Activated T-helper 1 cell treated with anti-CD3 and anti-CD28 coated beads, Interleukin-12 subunit alpha, Interleukin-12 subunit beta, Interleukin-2, Interleukin-4 antibody, amounts not matched to agents 30 ng/mL and 10 ng/mL and 1 ng/mL, durations not matched to agents 14 hours and 24 hours and 36 hours (primary cell): ENCODE measurements at regions of chr13 and their contacts with region 1.

Region 1: DNA sequence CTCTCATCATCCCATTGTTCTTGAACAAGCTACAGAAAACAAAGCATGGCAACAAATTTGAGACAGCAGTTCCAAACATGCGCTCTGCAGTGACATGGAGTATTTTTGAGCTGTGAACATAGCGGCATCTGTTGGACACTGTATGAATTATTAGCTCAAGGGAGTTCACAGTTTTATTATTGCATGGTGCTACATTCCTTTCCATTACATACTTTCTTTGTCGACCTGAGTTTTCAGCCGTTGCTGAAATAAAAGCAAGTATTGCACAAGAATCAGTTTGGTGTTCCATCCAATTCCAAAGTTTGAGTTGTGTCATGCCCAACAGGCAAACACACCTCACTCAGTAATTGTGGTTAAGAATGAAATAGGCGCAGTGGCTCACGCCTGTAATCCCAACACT is 30.1 kb upstream of the METTL21C start:
- DNase-seq: no peak
- H3K4me3 Mint-ChIP-seq: no peak overlapping the region
- H3K27ac Mint-ChIP-seq: no peak overlapping the region
- H3K4me1 Mint-ChIP-seq: peaks cover 13% of the 10 kb centered on the region
- H3K27me3 Mint-ChIP-seq: peaks cover 20% of the 10 kb centered on the region

Region 2: DNA sequence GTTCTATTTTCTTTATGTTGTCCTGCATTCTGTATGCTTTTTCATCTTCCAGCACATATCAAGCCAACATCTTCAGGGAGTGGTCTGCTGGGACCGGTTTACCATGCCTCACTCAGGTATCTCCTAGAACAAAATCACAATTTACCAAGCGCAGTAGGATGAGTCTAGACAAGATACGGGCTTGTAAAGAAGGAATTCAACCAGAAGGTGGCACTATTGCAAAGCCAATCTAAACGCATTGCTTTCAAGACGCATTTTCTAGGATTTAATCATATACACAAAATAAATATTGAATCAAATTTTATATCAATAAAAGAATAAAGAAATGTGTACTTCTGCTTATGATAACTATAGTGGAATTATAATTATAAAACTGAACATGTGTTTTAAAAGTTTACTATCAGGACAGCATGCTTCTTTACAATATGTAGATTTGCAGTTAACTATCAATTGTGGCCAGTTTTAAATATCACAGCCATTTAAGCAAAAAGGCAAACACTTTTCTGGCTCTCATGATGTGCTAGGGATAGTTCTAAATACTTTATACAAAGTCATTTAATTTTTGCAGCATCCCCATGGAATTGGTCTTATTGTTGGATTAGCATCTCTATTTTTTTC is 144.3 kb before region 1 on chr13:
- intact Hi-C with region 1: loop called (anchors 2 kb)
- DNase-seq: peak; percentile 22
- H3K4me3 Mint-ChIP-seq: no peak overlapping the region
- H3K27ac Mint-ChIP-seq: no peak overlapping the region
- H3K4me1 Mint-ChIP-seq: peaks cover 14% of the 10 kb centered on the region
- H3K27me3 Mint-ChIP-seq: peaks cover 7% of the 10 kb centered on the region

Region 3: DNA sequence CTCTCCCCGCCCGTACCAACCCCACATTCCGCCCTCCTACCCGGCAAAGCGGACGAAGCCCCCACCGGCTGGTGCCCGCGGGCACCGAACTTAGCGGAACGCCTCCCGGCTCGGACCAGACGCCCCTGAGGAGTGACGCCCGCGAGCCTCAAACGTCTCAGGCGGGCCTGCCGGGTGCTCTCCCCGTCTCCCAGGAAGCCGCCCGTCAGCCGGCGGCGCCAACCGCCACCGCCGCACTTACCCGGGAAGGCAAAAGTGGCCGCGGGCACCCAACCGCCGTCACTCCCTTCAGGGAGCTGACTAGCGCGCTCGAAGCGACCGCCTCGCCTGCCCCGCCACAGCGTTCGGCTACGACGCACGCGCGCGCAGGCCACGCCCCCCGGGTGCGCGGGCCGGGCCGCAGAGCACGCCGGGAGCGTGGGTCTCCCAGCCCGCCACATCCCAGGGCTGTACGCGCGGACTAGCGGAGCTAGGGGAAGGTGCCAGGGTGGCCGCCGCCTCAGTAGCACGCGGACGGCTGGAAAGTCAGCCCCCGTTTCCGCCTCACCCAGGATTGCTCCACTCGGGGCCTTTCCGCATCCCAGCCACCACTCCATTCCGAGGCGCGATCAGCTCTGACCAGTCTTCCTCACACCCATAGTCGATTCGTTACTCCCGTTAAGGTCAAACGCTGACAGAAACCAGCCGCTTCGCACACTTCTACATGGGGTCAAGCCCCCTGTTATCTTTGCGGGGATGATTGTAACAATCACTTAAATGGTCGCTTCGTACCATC is 48.7 kb after region 1 on chr13 and contains the start of gene TEX30:
- intact Hi-C with region 1: loop called (anchors 2 kb)
- DNase-seq: peak; percentile 89
- H3K4me3 Mint-ChIP-seq: peak within 1 kb of the TSS; percentile 95
- H3K27ac Mint-ChIP-seq: peak within 1 kb of the TSS; percentile 95
- H3K4me1 Mint-ChIP-seq: peaks cover 66% of the 10 kb centered on the region
- H3K27me3 Mint-ChIP-seq: no peaks in the 10 kb centered on the region
- total RNA-seq, gene TEX30: 60.2 and 66.0 TPM in 2 replicates